GM12878 (cell line): ENCODE measurements at regions of chr2 and their contacts with region 1.

Region 1: DNA sequence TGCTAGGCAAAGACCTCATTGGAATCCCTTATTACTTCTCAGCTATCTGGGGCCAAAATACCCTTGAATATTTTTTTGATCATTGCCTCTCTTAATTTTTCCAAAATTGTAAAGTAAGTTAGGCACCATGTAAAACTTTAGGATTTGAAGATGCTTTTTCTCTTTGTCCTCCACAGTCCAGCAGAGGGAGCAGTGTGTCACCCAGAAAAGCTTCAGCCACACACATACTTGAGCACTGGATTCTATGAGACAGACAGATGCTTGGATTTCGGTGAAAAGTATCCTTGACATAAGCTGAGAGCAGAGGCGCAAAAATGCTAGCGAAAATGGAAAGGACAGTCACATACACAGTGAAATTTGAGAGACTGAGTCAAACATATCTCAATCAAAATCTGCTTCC is 74.7 kb upstream of the KCNJ3 start:
- DNase-seq: no peak
- ATAC-seq: peak; percentile 77
- H3K4me3 ChIP-seq: no peak overlapping the region
- H3K27ac ChIP-seq: no peak overlapping the region
- H3K4me1 ChIP-seq: no peaks in the 10 kb centered on the region
- H3K27me3 ChIP-seq: no peaks in the 10 kb centered on the region
- CTCF ChIP-seq: peak; percentile 58 to 73 (median 65)
- EP300 ChIP-seq: no peak
- POLR2A ChIP-seq: no peak
- RAD21 ChIP-seq: peak; percentile 72

Region 2: GRCh38 chr2:154452906-154453493 is 170.8 kb before region 1 on chr2:
- CTCF ChIA-PET with region 1: interaction called, 11 read pairs
- POLR2A ChIA-PET with region 1: no interaction called
- RAD21 ChIA-PET with region 1: no interaction called
- SMC1A ChIA-PET with region 1: interaction called, 5 read pairs
- in situ Hi-C with region 1: no loop called
- intact Hi-C with region 1: loop called (anchors 5 kb)
- DNase-seq: peak; percentile 13
- ATAC-seq: peak; percentile 84
- H3K4me3 ChIP-seq: no peak overlapping the region
- H3K27ac ChIP-seq: no peak overlapping the region
- H3K4me1 ChIP-seq: no peaks in the 10 kb centered on the region
- H3K27me3 ChIP-seq: no peaks in the 10 kb centered on the region
- CTCF ChIP-seq: peak; percentile 30 to 56 (median 50); a peak in 5 of 6 replicates
- EP300 ChIP-seq: no peak
- POLR2A ChIP-seq: no peak
- RAD21 ChIP-seq: peak; percentile 38

Region 3: DNA sequence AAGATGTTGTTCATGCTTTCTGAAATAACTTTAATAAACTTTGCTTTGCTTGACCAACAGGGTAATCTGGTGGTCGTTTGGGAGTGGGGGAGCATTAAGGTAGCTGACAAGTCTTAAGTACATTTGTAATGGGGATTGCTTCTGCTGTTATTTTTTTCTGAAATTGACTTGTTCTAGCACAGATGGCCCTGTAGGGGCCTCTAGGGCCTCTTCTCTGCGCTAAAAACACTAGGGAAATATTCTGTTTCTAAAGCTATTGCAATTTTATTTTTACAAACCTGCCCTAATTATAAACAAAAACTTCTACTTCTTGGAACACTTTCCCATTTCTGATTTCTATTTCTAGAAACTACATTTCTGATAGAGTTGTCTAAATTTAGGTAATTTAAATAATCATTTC is 116.6 kb before region 1 on chr2:
- CTCF ChIA-PET with region 1: interaction called, 7 read pairs
- POLR2A ChIA-PET with region 1: no interaction called
- RAD21 ChIA-PET with region 1: interaction called, 10 read pairs
- SMC1A ChIA-PET with region 1: interaction called, 4 read pairs
- in situ Hi-C with region 1: no loop called
- intact Hi-C with region 1: no loop called
- DNase-seq: no peak
- ATAC-seq: peak; percentile 67
- H3K4me3 ChIP-seq: no peak overlapping the region
- H3K27ac ChIP-seq: no peak overlapping the region
- H3K4me1 ChIP-seq: no peaks in the 10 kb centered on the region
- H3K27me3 ChIP-seq: no peaks in the 10 kb centered on the region
- CTCF ChIP-seq: peak in 1 of 3 experiments; percentile 31; a peak in 2 of 6 replicates
- EP300 ChIP-seq: no peak
- POLR2A ChIP-seq: no peak
- RAD21 ChIP-seq: peak; percentile 28; the same call in 1 of the 2 replicates

Region 4: DNA sequence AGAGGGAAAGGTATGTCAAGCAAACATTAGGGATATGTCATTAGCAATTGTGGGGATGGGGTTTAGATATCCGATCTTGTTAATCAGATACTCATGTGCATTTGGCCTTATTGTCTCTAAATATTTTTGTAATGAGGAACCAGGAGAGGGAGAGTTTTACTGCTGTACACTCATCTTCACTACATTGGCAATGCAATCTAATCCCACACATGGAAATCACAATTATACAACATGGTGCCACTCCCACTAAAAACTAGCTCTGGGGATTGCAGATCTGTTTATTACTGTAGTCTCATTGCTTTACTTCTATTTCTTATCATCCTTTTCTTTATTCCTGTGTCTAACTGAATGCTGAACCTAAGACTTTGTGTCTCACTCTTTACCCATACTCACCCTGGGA is 35.0 kb after region 1 on chr2:
- CTCF ChIA-PET with region 1: no interaction called
- POLR2A ChIA-PET with region 1: no interaction called
- RAD21 ChIA-PET with region 1: no interaction called
- SMC1A ChIA-PET with region 1: no interaction called
- in situ Hi-C with region 1: no loop called
- intact Hi-C with region 1: no loop called
- DNase-seq: no peak
- ATAC-seq: no peak
- H3K4me3 ChIP-seq: no peak overlapping the region
- H3K27ac ChIP-seq: no peak overlapping the region
- H3K4me1 ChIP-seq: no peaks in the 10 kb centered on the region
- H3K27me3 ChIP-seq: no peaks in the 10 kb centered on the region
- CTCF ChIP-seq: no peak
- EP300 ChIP-seq: no peak
- POLR2A ChIP-seq: no peak
- RAD21 ChIP-seq: no peak

Region 5: GRCh38 chr2:155223781-155224406 is 600.1 kb after region 1 on chr2:
- CTCF ChIA-PET with region 1: interaction called, 10 read pairs
- POLR2A ChIA-PET with region 1: no interaction called
- RAD21 ChIA-PET with region 1: interaction called, 5 read pairs
- SMC1A ChIA-PET with region 1: interaction called, 6 read pairs
- in situ Hi-C with region 1: no loop called
- intact Hi-C with region 1: loop called (anchors 2 kb)
- DNase-seq: no peak
- ATAC-seq: peak; percentile 80
- H3K4me3 ChIP-seq: no peak overlapping the region
- H3K27ac ChIP-seq: no peak overlapping the region
- H3K4me1 ChIP-seq: peaks cover 1% of the 10 kb centered on the region; the same call in 1 of the 2 replicates
- H3K27me3 ChIP-seq: no peaks in the 10 kb centered on the region
- CTCF ChIP-seq: peak; percentile 33 to 61 (median 52); a peak in 5 of 6 replicates
- EP300 ChIP-seq: no peak
- POLR2A ChIP-seq: no peak
- RAD21 ChIP-seq: peak; percentile 87

Region 6: DNA sequence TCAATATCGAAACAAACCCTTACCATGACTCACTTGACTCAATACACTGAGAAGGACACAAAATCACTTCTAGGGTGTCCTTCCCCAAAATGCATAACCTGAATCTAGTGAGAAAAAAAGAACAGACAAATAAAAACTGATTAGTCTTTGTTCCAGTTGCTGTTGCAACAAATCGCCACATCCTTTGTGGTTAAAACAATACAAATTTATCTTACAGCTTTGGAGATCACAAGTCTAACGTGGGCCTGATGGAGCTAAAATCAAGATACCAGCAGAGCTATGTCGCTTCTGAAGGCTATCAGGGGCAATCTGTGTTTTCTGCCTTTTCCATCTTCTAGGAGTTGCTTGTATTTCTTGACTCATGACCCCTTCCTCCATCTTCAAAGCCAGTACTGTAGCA is 616.4 kb after region 1 on chr2:
- CTCF ChIA-PET with region 1: no interaction called
- POLR2A ChIA-PET with region 1: no interaction called
- RAD21 ChIA-PET with region 1: no interaction called
- SMC1A ChIA-PET with region 1: no interaction called
- in situ Hi-C with region 1: loop called (anchors 10 kb)
- intact Hi-C with region 1: no loop called
- DNase-seq: no peak
- ATAC-seq: no peak
- H3K4me3 ChIP-seq: no peak overlapping the region
- H3K27ac ChIP-seq: no peak overlapping the region
- H3K4me1 ChIP-seq: no peaks in the 10 kb centered on the region
- H3K27me3 ChIP-seq: no peaks in the 10 kb centered on the region; a peak in 1 of 4 replicates
- CTCF ChIP-seq: no peak
- EP300 ChIP-seq: no peak
- POLR2A ChIP-seq: no peak
- RAD21 ChIP-seq: no peak

Region 7: GRCh38 chr2:155256803-155257202 is 633.0 kb after region 1 on chr2:
- CTCF ChIA-PET with region 1: no interaction called
- POLR2A ChIA-PET with region 1: no interaction called
- RAD21 ChIA-PET with region 1: no interaction called
- SMC1A ChIA-PET with region 1: no interaction called
- in situ Hi-C with region 1: no loop called
- intact Hi-C with region 1: loop called (anchors 1 kb)
- DNase-seq: no peak
- ATAC-seq: peak; percentile 87
- H3K4me3 ChIP-seq: no peak overlapping the region
- H3K27ac ChIP-seq: no peak overlapping the region
- H3K4me1 ChIP-seq: no peaks in the 10 kb centered on the region
- H3K27me3 ChIP-seq: no peaks in the 10 kb centered on the region
- CTCF ChIP-seq: 0 out of 6 replicates have a peak, but pooled peaks of 1 of the 3 experiments have one; percentile 8
- EP300 ChIP-seq: no peak
- POLR2A ChIP-seq: no peak
- RAD21 ChIP-seq: no peak

Region 8: GRCh38 chr2:155310589-155310988 is 686.8 kb after region 1 on chr2:
- CTCF ChIA-PET with region 1: interaction called, 5 read pairs
- POLR2A ChIA-PET with region 1: no interaction called
- RAD21 ChIA-PET with region 1: interaction called, 7 read pairs
- SMC1A ChIA-PET with region 1: no interaction called
- in situ Hi-C with region 1: no loop called
- intact Hi-C with region 1: loop called (anchors 1 kb)
- DNase-seq: no peak
- ATAC-seq: peak; percentile 67
- H3K4me3 ChIP-seq: no peak overlapping the region
- H3K27ac ChIP-seq: no peak overlapping the region
- H3K4me1 ChIP-seq: no peaks in the 10 kb centered on the region
- H3K27me3 ChIP-seq: no peaks in the 10 kb centered on the region
- CTCF ChIP-seq: peak; percentile 26 to 62 (median 48); a peak in 5 of 6 replicates
- EP300 ChIP-seq: no peak
- POLR2A ChIP-seq: no peak
- RAD21 ChIP-seq: peak; percentile 83